A549 (cell line): ENCODE measurements at regions of chr2 and their contacts with region 1.

Region 1: DNA sequence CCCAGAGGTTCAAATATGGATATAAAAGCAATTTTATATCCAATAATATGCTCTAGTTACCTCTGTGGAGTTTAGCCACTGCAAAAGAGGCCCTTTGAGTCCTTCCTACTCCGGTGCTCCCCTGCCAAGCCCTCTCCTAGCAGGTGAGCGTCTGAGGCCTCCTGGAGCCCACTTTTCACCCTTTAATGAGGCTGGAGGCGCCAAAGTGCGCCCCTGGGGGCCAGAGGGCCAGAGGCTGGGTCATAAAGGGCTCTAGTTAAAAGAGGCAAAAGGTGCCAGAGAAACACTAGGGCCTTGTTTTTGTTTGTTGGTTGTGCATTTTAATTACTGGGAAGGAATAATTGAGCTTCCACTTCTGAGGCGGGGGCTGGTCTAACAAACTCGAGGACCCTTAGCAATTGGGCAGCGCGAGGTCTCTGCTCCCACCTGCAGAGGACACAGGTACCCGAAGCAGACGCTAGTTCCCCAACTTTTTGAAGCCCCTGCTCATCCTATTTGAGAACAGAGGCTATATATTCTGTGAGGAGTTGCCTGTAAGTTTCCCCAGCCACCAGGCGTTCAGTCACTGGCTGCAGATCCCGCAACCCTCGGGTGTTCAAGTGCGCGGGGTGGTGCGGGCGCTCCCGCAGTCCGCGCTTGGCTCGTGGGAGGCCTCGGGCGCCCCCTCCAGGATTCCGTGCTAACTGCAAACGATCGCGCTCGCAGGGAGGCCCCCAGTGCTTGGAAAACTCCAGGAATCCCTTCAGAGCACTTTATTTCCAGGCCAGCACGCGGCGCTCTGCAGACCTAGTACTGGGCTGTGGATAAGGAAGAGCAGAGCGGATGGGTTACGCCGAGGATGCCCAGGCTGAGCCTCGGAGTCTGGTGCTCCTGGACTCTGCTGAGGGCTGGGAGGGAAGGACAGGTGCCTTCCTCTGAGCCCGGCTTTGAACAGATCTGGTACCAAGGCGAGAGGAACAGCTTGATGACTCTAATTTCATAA is 14.1 kb downstream of the MSGN1 start:
- DNase-seq: peak; percentile 76 to 92
- ATAC-seq: peak; percentile 97 to 100
- H3K4me3 ChIP-seq: peak overlapping the region; percentile 34
- H3K27ac ChIP-seq: 0 out of 6 replicates have a peak overlapping the region, but pooled peaks of 1 of the 2 experiments have one; percentile 22
- H3K4me1 ChIP-seq: peaks cover 4% of the 10 kb centered on the region; the same call in 1 of the 3 replicates
- CTCF ChIP-seq: peak; percentile 93
- EP300 ChIP-seq: no peak
- POLR2A ChIP-seq: no peak
- RAD21 ChIP-seq: peak; percentile 59 to 71

Region 2: DNA sequence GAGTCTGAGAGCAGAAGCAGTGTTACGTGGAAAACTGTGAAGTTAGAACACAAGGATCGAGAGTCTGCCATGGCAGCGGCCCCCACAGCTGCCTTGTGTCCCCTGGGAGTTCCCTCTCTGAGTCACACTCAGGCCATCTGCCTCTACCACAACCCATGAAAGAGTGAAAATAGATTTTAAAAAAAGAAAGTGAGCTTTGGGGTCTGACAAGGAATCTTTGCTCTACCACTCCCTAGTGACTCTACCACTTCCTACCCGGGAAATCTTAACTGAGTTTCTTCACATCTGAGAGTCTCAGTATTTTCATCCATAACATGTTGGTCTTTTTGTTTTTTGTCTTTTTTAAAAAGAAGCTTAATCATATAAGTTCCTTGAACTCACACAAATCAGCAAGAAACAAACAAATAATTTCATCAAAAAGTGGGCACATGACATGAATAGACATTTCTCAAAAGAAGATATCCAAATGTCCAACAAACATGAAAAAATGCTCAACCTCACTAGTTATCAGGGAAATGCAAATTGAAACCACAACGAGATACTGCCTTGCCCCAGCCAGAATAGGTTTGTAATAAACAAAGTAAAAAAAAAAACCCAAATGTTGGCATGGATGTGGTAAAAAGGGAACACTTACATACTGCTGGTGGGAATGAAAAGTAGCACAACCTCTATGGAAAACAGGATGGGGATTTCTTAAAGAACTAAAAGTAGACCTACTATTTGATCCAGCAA is 16.4 kb before region 1 on chr2:
- CTCF ChIA-PET with region 1: interaction called, 34 read pairs
- POLR2A ChIA-PET with region 1: no interaction called
- DNase-seq: no peak
- ATAC-seq: no peak
- H3K4me3 ChIP-seq: no peak overlapping the region
- H3K27ac ChIP-seq: no peak overlapping the region
- H3K4me1 ChIP-seq: no peaks in the 10 kb centered on the region
- CTCF ChIP-seq: no peak
- EP300 ChIP-seq: no peak
- POLR2A ChIP-seq: no peak
- RAD21 ChIP-seq: no peak

Region 3: DNA sequence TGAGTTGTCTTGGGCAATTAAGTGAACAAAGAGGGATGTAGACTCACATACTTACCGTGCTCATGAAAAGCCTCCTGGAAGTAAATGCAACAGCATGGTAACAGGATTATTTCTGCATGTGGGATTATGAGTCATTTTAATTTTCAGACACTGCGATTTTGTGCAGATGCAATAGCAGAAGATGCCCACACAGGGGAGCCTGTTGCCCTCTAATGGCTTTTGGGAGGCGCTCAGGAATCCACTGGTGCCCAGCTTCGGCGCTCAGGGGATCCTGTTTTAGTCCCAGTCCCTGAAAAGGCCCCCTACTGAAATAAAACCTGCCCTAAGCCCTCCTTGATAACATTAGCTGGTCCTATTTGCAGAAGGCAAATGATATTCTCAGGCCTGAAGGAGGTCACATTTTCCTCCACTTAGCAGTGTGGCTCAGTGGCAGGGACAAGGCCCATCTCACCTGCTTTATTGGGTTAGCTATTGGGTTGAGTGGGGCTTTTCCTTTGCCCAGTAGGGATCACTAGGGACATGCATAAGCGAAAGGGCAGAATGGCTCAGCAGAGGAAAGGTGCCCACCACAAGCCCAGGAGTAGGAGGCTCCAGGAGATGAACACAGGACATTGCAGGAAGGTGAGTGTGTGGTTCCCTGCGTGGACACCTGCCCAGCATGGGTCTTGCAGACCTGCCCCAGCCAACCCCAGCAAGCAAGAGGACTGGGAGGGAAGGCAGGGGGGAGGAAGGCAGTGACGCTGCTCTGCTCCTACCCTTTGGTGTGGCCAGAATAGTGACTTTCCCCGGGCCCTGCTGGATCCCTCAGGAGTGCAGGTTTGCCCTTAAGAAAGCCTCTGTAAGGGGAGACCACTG is 21.6 kb after region 1 on chr2:
- CTCF ChIA-PET with region 1: interaction called, 18 read pairs
- POLR2A ChIA-PET with region 1: no interaction called
- DNase-seq: peak; percentile 64 to 71
- ATAC-seq: peak; percentile 79 to 91
- H3K4me3 ChIP-seq: no peak overlapping the region
- H3K27ac ChIP-seq: no peak overlapping the region
- H3K4me1 ChIP-seq: no peaks in the 10 kb centered on the region
- CTCF ChIP-seq: peak; percentile 94
- EP300 ChIP-seq: no peak
- POLR2A ChIP-seq: no peak
- RAD21 ChIP-seq: peak; percentile 96 to 98

Region 4: GRCh38 chr2:17892770-17893534 is 62.6 kb after region 1 on chr2:
- CTCF ChIA-PET with region 1: no interaction called
- POLR2A ChIA-PET with region 1: no interaction called
- DNase-seq: no peak
- ATAC-seq: no peak; a peak in 1 of 6 replicates
- H3K4me3 ChIP-seq: no peak overlapping the region
- H3K27ac ChIP-seq: no peak overlapping the region
- H3K4me1 ChIP-seq: 0 out of 3 replicates have a peak, but pooled peaks cover 4% of the 10 kb centered on the region
- CTCF ChIP-seq: no peak
- EP300 ChIP-seq: no peak
- POLR2A ChIP-seq: no peak
- RAD21 ChIP-seq: no peak